ENCODE measurements at regions of chr3 and their contacts with region 1.

Region 1: GRCh38 chr3:143674100-143674968 is 173.9 kb downstream of the SLC9A9 start:
- DNase-seq: peak; percentile 94
- ATAC-seq: peak; percentile 90
- H3K4me3 ChIP-seq: peak overlapping the region in 3 of 5 experiments; percentile 8 to 57 (median 20)
- H3K4me3 Mint-ChIP-seq: peak overlapping the region; percentile 75
- H3K27ac ChIP-seq: peak overlapping the region; percentile 69 to 77
- H3K27ac Mint-ChIP-seq: peak overlapping the region; percentile 94
- H3K4me1 ChIP-seq: peaks cover 23 to 30% of the 10 kb centered on the region in 2 donors
- H3K4me1 Mint-ChIP-seq: peaks cover 45% of the 10 kb centered on the region
- H3K27me3 ChIP-seq: no peaks in the 10 kb centered on the region
- H3K27me3 Mint-ChIP-seq: no peaks in the 10 kb centered on the region
- CTCF ChIP-seq: peak; percentile 97

Region 2: GRCh38 chr3:143001369-143002082 is 672.8 kb before region 1 on chr3 and contains the start of gene U2SURP:
- CTCF ChIA-PET with region 1: no interaction called
- POLR2A ChIA-PET with region 1: no interaction called
- intact Hi-C with region 1: loop called (anchors 1 kb)
- DNase-seq: peak; percentile 95
- ATAC-seq: peak; percentile 96
- H3K4me3 ChIP-seq: peak within 1 kb of the TSS; percentile 73 to 100 (median 97)
- H3K4me3 Mint-ChIP-seq: peak within 1 kb of the TSS; percentile 96
- H3K27ac ChIP-seq: peak within 1 kb of the TSS; percentile 86 to 98
- H3K27ac Mint-ChIP-seq: peak within 1 kb of the TSS; percentile 96
- H3K4me1 ChIP-seq: peaks cover 19 to 20% of the 10 kb centered on the region in 2 donors
- H3K4me1 Mint-ChIP-seq: peaks cover 34% of the 10 kb centered on the region
- H3K27me3 ChIP-seq: no peaks in the 10 kb centered on the region
- H3K27me3 Mint-ChIP-seq: no peaks in the 10 kb centered on the region
- CTCF ChIP-seq: no peak
- total RNA-seq, gene U2SURP: 138 and 169 TPM in 2 replicates

Region 3: GRCh38 chr3:143040261-143040879 is 634.0 kb before region 1 on chr3:
- CTCF ChIA-PET with region 1: interaction called, 11 read pairs
- POLR2A ChIA-PET with region 1: no interaction called
- intact Hi-C with region 1: loop called (anchors 2 kb)
- DNase-seq: peak; percentile 18
- ATAC-seq: no peak
- H3K4me3 ChIP-seq: no peak overlapping the region
- H3K4me3 Mint-ChIP-seq: no peak overlapping the region
- H3K27ac ChIP-seq: no peak overlapping the region
- H3K27ac Mint-ChIP-seq: no peak overlapping the region
- H3K4me1 ChIP-seq: no peaks in the 10 kb centered on the region
- H3K4me1 Mint-ChIP-seq: peaks cover 7% of the 10 kb centered on the region
- H3K27me3 ChIP-seq: no peaks in the 10 kb centered on the region
- H3K27me3 Mint-ChIP-seq: no peaks in the 10 kb centered on the region
- CTCF ChIP-seq: peak; percentile 69

Region 4: DNA sequence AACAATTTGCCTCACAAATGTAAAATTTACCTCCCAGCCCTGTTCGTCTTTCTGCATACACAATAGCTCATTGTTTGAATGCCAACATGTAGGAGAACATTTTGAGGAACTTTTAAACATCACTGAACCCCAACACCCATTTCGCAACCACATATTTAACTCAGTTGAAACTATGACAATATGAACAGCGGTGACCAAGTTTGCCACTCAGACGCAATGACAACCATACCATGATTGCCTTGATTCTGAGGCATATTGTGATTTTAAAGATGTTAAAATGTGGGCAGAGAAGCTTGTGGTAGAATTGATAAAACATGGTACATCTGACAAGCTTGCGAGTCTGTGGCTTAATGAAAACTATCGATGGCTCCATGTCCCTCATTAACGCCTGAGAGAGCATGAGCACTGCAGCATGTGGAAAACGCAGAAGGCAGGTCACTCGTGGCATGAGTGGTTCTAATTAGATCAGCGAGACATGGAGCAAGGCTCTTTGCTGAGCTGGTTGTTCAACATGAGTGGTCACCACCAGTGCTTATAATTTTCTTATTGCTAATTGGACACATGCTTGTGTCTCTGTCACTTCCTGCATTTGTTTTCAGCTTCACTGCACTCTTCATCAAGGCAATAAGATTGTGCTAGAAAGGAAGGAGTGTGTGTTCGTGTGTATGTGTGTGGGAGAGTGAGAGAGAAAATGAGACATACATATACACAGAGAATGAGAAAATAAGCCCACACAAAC is 437.9 kb before region 1 on chr3:
- CTCF ChIA-PET with region 1: no interaction called
- POLR2A ChIA-PET with region 1: no interaction called
- intact Hi-C with region 1: loop called (anchors 1 kb)
- DNase-seq: peak; percentile 29
- ATAC-seq: peak; percentile 58
- H3K4me3 ChIP-seq: no peak overlapping the region
- H3K4me3 Mint-ChIP-seq: peak overlapping the region; percentile 35
- H3K27ac ChIP-seq: no peak overlapping the region
- H3K27ac Mint-ChIP-seq: no peak overlapping the region
- H3K4me1 ChIP-seq: peaks cover 13% of the 10 kb centered on the region in 2 donors
- H3K4me1 Mint-ChIP-seq: peaks cover 15% of the 10 kb centered on the region
- H3K27me3 ChIP-seq: no peaks in the 10 kb centered on the region
- H3K27me3 Mint-ChIP-seq: no peaks in the 10 kb centered on the region
- CTCF ChIP-seq: no peak

Region 5: DNA sequence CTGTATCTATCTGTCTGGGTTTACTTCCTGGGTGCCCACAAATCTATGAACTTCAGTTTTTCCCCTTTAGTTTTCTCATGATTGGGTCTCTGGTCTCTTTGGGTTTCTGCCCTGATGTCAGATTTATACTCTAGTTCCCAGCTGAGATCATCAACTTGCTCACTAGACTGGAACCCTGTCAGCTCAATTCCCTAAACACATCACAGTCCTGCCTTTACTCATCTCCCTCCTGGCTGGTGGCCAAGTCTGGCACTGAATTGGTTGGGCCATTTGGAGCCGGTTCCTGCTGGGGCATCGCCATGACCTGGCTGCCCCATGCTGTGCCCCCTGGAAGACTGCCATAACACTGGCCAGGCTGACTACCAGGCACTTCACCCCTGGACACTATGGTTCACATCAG is 209.5 kb before region 1 on chr3:
- CTCF ChIA-PET with region 1: no interaction called
- POLR2A ChIA-PET with region 1: no interaction called
- intact Hi-C with region 1: no loop called
- DNase-seq: no peak
- ATAC-seq: no peak
- H3K4me3 ChIP-seq: no peak overlapping the region
- H3K4me3 Mint-ChIP-seq: no peak overlapping the region
- H3K27ac ChIP-seq: no peak overlapping the region
- H3K27ac Mint-ChIP-seq: no peak overlapping the region
- H3K4me1 ChIP-seq: no peaks in the 10 kb centered on the region
- H3K4me1 Mint-ChIP-seq: peaks cover 8% of the 10 kb centered on the region
- H3K27me3 ChIP-seq: no peaks in the 10 kb centered on the region
- H3K27me3 Mint-ChIP-seq: no peaks in the 10 kb centered on the region
- CTCF ChIP-seq: no peak

Region 6: DNA sequence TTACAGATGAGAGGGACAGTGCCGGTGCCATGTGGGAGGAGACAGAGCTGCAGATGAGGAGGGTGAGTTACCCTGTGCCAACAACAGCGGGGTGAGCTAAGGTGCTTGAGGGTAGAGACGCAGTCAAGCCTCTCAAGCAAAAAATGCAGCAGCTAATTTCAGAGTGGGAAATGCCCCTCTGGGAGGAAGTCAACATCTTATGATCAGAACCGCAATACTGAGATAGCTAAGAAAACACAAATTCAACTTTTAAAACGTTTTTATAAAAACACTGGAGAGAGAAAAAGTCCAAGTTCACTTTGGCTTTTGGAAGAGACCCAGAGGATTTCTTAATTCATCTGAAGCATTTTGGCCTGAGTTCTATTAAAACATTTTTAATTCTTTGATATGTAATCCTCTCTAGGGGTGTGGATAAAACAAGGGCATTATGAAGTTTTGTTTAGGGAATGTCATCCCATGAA is 145.3 kb before region 1 on chr3:
- CTCF ChIA-PET with region 1: interaction called, 8 read pairs
- POLR2A ChIA-PET with region 1: no interaction called
- intact Hi-C with region 1: loop called (anchors 2 kb)
- DNase-seq: peak; percentile 91
- ATAC-seq: peak; percentile 99
- H3K4me3 ChIP-seq: peak overlapping the region in 4 of 5 experiments; percentile 5 to 50 (median 22)
- H3K4me3 Mint-ChIP-seq: peak overlapping the region; percentile 72
- H3K27ac ChIP-seq: peak overlapping the region; percentile 98
- H3K27ac Mint-ChIP-seq: peak overlapping the region; percentile 91
- H3K4me1 ChIP-seq: peaks cover 55 to 69% of the 10 kb centered on the region in 2 donors
- H3K4me1 Mint-ChIP-seq: peaks cover 79% of the 10 kb centered on the region
- H3K27me3 ChIP-seq: no peaks in the 10 kb centered on the region
- H3K27me3 Mint-ChIP-seq: no peaks in the 10 kb centered on the region
- CTCF ChIP-seq: no peak

Region 7: DNA sequence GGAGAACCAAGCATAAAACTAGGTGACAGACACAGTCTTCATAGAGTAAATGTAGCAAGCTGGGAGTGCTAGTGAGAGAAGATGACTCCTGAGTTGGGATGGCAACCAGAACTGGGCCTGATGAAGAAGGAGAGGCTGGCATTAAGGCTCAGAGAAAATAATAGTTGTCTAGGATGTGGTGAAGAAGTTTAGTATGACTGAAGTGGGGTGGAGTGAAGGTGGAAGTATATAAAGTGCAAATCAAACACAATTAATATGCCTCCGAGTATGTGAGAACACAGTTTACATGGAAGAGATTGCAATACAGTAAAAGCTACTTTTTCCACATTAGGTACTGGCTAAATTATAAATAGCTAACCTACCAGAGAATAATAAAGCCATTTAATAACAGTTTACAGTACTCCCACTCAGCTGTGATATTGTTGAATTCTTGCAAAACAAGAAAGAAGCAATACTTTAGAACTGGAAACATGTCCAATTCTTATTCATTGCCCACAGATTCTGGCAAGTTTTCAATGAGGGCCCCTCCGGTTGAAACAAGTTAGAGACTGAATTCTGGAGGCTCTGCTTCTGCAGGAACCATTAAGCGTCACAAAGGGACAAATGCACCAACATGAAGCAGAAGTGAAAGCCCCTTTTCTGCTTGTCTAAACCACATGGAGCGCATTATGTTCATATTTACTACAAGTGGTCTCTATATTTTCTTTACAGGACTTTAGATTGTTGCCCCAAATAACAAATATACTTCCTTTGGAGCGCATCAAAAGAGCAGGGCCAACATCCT is 69.7 kb before region 1 on chr3:
- CTCF ChIA-PET with region 1: interaction called, 5 read pairs
- POLR2A ChIA-PET with region 1: no interaction called
- intact Hi-C with region 1: loop called (anchors 2 kb)
- DNase-seq: peak; percentile 55
- ATAC-seq: peak; percentile 80
- H3K4me3 ChIP-seq: peak overlapping the region in 1 of 5 experiments; percentile 13
- H3K4me3 Mint-ChIP-seq: peak overlapping the region; percentile 67
- H3K27ac ChIP-seq: peak overlapping the region; percentile 39 to 72
- H3K27ac Mint-ChIP-seq: peak overlapping the region; percentile 86
- H3K4me1 ChIP-seq: peaks cover 29 to 34% of the 10 kb centered on the region in 2 donors
- H3K4me1 Mint-ChIP-seq: peaks cover 40% of the 10 kb centered on the region
- H3K27me3 ChIP-seq: no peaks in the 10 kb centered on the region
- H3K27me3 Mint-ChIP-seq: no peaks in the 10 kb centered on the region
- CTCF ChIP-seq: no peak

Region 8: DNA sequence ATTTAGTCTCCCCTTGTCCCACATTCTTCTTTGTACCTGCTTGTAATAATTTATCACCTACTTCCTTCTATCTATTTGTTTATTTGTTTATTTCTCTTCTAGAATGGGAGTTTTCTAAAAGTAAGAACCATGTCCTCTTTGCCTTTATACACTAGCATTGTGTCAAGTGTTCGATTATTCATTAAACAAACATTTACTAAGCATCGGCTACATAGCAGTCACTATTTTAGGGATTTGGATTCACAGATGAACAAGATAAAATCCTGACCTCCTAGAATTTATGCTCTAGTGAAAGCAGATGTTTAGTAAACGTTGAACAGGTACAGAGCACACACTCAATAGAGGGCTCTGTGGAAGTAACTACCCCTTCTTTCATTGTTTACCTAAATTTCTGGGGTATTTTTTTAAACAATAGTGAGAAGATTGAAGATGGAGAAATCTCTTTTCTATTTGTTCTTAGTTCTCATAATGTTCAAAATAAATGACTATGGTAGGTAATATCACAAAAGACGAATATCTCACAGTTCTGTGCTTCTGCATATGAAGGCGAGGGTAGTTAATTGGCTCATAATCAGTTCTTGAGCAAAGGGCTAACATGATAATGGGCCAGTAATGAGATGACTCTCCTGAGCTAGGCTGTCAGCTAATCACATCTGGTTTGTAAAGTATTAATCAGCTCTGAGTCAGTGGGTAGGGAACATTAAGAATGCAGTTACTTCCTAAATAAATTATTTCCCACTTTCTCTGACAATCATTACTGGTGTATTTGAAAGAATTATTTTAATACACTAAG is 62.1 kb after region 1 on chr3:
- CTCF ChIA-PET with region 1: no interaction called
- POLR2A ChIA-PET with region 1: no interaction called
- intact Hi-C with region 1: no loop called
- DNase-seq: no peak
- ATAC-seq: no peak
- H3K4me3 ChIP-seq: no peak overlapping the region
- H3K4me3 Mint-ChIP-seq: no peak overlapping the region
- H3K27ac ChIP-seq: no peak overlapping the region
- H3K27ac Mint-ChIP-seq: no peak overlapping the region
- H3K4me1 ChIP-seq: no peaks in the 10 kb centered on the region
- H3K4me1 Mint-ChIP-seq: no peaks in the 10 kb centered on the region
- H3K27me3 ChIP-seq: no peaks in the 10 kb centered on the region
- H3K27me3 Mint-ChIP-seq: no peaks in the 10 kb centered on the region
- CTCF ChIP-seq: no peak

Measured in B cell (primary cell).